KBM-7 (cell line): ENCODE measurements at regions of chr5 and their contacts with region 1.

Region 1: GRCh38 chr5:73591102-73591695 is 25.7 kb downstream of the UTP15 start:
- DNase-seq: peak; percentile 88

Region 2: GRCh38 chr5:73344835-73345234 is 246.4 kb before region 1 on chr5:
- in situ Hi-C with region 1: no loop called
- DNase-seq: no peak

Region 3: DNA sequence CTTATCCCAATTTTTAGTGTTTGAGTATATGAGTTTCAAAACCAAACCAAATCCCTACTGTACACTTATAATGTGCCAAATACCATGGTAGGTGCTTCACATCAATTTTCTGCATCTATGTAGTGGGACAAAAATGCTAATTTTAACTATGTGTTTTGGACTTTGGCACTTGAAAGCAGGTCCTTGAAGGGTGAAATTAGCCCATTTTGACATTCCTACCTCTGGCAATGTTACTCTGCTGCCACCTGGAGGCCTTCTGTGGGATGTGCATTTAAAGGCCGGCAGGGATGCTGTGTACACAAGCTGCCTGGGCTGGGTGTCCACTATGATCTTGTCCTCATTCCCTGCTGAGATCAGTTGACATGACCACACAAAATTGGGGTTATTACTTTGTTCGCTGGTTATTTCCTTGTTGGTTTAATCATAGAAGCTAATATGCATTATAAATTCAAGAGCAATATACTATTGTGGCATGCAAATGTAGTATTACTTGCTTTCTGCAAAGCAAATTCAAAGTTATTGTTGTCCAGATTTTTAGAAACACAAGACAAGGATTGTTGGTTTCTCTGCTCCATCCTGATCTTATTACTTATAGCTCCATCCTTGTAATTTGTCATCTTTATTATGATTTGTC is 201.6 kb after region 1 on chr5:
- in situ Hi-C with region 1: loop called (anchors 25 kb)
- DNase-seq: peak; percentile 67

Region 4: DNA sequence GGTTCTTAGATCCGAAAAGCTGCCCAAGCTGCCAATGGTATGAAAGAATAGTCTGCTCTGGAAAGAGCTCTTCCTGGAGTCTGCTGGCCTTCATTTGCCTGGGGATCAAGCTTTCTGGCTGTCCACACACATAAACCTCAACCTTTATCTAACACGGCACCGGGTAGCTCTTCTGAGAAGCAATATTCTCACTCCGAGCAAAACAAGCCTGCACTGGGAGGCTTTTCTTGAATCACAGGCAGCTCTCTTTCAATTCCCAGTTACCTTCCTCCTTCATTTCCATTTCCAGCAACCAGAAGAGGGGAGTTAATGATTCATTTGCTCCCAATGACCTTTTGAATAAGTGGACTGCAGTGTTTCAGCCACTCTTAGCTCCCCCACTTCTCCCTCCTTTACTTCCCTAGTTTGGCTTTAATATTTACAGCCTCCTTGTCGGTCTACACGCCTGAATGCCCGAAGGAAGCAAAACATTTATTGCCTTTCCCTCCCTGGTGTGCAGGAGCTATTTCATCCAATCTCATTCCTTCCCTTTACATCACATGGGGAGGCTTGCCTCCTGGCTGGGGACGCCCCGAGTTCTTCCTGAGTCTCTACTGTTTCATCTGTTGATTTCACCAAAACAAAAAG is 221.9 kb after region 1 on chr5:
- in situ Hi-C with region 1: no loop called
- DNase-seq: no peak

Region 5: GRCh38 chr5:74141053-74141452 is 549.9 kb after region 1 on chr5:
- in situ Hi-C with region 1: no loop called
- DNase-seq: no peak